Motor neuron (in vitro differentiated cells): ENCODE measurements at regions of chr18 and their contacts with region 1.

Region 1: DNA sequence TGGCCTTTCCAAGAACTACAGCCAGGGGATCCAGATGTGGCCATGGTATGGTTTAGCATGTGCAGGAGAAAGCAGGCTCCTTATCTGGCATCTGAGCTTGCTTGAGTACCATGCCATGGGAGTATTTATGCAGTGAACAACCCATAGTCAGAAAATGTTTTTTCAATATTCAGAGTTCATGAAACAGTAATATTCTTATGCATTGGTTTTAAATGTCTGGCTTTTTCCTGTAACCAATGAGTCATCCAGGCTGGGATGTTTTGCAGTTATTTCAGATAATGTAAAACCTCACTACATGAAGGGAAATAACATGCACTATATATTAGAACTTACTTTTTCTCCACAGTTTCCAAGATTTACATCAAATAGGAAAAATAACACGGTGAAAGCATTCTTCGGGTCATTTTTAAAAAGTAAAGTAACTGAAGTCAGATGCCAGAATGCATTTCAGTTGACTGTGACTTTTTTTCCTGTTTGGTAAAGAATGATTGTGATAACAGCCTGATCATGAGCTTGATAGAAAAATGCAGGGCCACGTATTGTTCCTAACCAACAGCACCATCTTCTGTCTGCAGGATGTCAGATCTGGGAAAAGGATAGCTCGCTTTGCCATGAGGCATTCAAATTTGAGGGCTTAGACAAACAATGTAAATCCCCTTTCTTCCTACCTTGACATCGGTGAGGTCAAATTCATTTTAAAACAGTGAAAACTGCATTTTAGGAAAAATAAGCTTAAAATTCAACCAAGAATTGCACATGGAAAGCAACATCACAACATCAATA is 152.8 kb downstream of the DSC3 start:
- ATAC-seq: peak; percentile 39 to 82 (median 68)
- H3K4me3 ChIP-seq: no peak overlapping the region
- H3K27ac ChIP-seq: no peak overlapping the region
- H3K4me1 ChIP-seq: peaks cover 0 to 10% of the 10 kb centered on the region in 2 donors

Region 2: GRCh38 chr18:29874519-29875098 is 1015.1 kb before region 1 on chr18:
- in situ Hi-C with region 1: loop called in 1 of 9 experiments (anchors 25 kb)
- ATAC-seq: peak in 2 of 8 experiments; percentile 52 to 76
- H3K4me3 ChIP-seq: no peak overlapping the region
- H3K27ac ChIP-seq: no peak overlapping the region
- H3K4me1 ChIP-seq: no peaks in the 10 kb centered on the region